Endothelial cell of umbilical vein (primary cell): ENCODE measurements at regions of chr16 and their contacts with region 1.

Region 1: GRCh38 chr16:48687421-48688038 is 77.5 kb upstream of the N4BP1 start:
- DNase-seq: peak; percentile 59
- H3K4me3 ChIP-seq: no peak overlapping the region
- H3K27ac ChIP-seq: no peak overlapping the region
- H3K4me1 ChIP-seq: no peaks in the 10 kb centered on the region
- H3K27me3 ChIP-seq: no peaks in the 10 kb centered on the region
- CTCF ChIP-seq: peak; percentile 64
- POLR2A ChIP-seq: no peak

Region 2: DNA sequence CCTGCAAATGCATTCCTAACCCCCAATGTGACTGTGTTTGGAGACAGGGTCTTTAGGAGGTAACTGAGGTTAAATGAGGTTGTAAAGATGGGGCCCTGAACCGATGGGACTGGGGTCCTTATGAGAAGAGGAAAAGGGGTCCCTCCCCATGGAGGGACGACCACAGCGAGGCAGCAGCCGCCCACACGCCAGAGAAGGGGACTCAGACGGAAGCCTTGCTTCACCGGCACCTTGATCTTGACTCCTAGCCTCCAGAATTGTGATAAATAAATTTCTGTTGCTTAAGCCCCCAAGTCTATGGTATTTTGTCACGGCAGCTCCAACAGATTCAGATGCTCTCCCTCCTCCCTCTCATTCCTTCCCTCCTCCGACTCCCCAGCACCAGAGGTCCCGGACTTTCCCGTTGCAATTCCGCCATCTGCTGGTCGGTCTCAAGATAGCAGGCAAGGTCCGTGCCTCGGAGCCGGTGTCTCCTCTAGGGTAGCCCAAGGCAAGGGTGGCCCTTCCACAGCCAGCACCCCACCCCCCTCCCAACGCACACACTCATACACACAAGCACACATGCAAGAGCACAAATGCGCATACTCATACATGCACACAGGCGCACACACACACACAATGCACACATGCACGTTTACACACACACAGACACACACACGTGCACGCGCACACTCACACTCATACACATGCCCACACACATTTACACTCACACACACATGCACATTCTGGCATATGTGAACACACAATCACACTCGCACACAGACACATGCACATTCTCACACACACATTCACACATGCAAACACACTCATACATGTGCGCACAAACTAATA is 663.0 kb after region 1 on chr16:
- CTCF ChIA-PET with region 1: interaction called, 30 read pairs
- POLR2A ChIA-PET with region 1: no interaction called
- dilution Hi-C with region 1: no loop called
- intact Hi-C with region 1: no loop called
- DNase-seq: peak; percentile 21
- H3K4me3 ChIP-seq: no peak overlapping the region
- H3K27ac ChIP-seq: no peak overlapping the region
- H3K4me1 ChIP-seq: no peaks in the 10 kb centered on the region
- H3K27me3 ChIP-seq: no peaks in the 10 kb centered on the region
- CTCF ChIP-seq: peak; percentile 72 to 82
- POLR2A ChIP-seq: no peak